Thyroid gland (tissue), 4 donors: ENCODE measurements at regions of chr3 and their contacts with region 1.

Region 1: GRCh38 chr3:194573691-194574437 is 59.4 kb downstream of the TMEM44 start:
- DNase-seq: peak; percentile 50 to 54
- H3K4me3 ChIP-seq: no peak overlapping the region
- H3K27ac ChIP-seq: peak overlapping the region in 1 of 3 donors; percentile 48
- H3K4me1 ChIP-seq: peaks cover 8 to 25% of the 10 kb centered on the region in 2 donors
- H3K27me3 ChIP-seq: no peaks in the 10 kb centered on the region
- CTCF ChIP-seq: peak in 5 of 6 experiments; percentile 17 to 70 (median 63)
- POLR2A ChIP-seq: no peak

Region 2: DNA sequence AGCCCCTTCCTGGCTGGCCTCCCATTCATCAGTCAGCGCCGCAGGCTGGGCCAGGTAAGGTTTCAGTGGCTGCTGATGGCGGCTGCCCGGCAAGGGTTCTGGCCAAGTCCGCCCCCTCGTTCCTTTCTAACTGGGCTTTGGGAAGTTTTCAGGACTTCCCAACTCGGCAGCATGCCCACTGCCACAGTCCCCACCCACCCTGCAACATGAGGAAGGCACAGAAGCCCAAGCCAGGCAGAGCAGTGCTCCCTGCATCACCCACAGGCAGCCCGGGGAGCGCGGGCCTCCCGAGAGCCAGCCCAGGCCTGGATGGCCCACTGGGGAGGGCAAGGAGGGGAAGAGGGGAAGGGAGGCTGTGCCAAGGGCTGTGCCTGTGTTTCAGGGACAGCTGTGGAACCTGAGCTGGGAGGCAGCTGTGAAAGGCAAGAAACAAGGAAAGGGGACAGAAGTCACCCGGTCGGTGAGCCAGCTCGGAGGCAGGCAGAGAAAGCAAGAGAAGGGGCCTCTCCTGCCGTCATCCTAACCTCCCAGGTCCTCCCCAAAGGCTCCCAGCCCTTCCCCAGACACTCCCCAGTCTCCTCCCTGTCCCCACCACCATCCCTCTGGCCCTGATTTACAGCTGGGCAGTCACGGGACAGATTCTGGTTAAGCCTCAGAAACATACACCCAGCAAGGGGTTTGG is 296.6 kb before region 1 on chr3:
- intact Hi-C with region 1: no loop called
- DNase-seq: peak; percentile 74 to 78
- H3K4me3 ChIP-seq: no peak overlapping the region
- H3K27ac ChIP-seq: peak overlapping the region; percentile 81 to 93 (median 85)
- H3K4me1 ChIP-seq: peaks cover 28 to 34% of the 10 kb centered on the region in 2 donors
- H3K27me3 ChIP-seq: no peaks in the 10 kb centered on the region
- CTCF ChIP-seq: no peak
- POLR2A ChIP-seq: peak in 1 of 2 donors; percentile 47

Region 3: GRCh38 chr3:194472290-194472920 is 101.5 kb before region 1 on chr3:
- intact Hi-C with region 1: loop called (anchors 5 kb)
- DNase-seq: no peak
- H3K4me3 ChIP-seq: no peak overlapping the region
- H3K27ac ChIP-seq: no peak overlapping the region
- H3K4me1 ChIP-seq: peaks cover 5 to 20% of the 10 kb centered on the region in 2 donors
- H3K27me3 ChIP-seq: no peaks in the 10 kb centered on the region
- CTCF ChIP-seq: peak; percentile 84 to 98 (median 94)
- POLR2A ChIP-seq: no peak

Region 4: DNA sequence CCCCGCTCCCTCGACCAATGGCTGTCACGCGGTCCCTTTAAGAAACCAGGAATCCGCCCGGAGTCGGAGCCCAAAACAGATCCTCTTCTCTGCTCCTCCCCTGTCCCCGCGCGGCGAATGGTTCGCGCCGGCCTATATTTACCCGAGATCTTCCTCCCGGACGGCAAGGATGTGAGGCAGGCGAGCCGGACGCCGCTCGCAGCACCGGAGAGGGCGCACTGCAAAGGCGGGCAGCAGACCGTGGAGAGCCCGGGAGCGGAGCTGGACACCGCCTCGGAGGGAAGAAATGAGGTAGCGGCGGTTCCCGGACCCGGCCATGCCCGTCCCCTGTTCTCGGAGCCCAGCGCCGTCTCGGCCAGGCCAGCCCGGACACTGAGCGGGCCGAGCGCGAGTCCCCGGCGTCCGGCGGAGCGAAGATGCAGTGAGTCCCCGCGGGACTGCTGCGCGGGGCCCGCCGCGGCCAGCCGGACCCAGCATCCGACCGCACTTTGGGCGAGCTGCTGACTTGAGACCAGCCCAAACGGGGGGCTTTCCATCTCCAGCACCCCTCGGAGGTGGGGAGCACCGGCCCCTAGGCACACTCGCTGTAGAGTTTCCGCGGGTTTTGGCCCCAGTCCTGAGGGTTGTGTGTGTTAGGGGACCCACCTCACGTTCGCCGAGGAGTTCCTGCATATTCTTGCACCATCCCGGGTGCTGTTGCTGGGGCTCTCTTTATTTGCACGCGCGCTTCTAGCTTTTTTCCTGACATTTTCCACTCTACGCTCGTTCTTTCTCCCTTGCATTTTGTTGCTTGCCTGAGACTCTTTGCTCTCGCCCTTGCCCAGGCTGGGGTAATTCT is 112.1 kb after region 1 on chr3 and contains the start of gene FAM43A:
- intact Hi-C with region 1: no loop called
- DNase-seq: peak; percentile 89 to 94
- H3K4me3 ChIP-seq: peak within 1 kb of the TSS in 2 of 3 donors; percentile 44 to 51
- H3K27ac ChIP-seq: peak within 1 kb of the TSS; percentile 51 to 76 (median 60)
- H3K4me1 ChIP-seq: peaks cover 25 to 32% of the 10 kb centered on the region in 2 donors
- H3K27me3 ChIP-seq: no peaks in the 10 kb centered on the region
- CTCF ChIP-seq: peak in 3 of 6 experiments; percentile 7 to 20 (median 18)
- POLR2A ChIP-seq: peak; percentile 83 to 92
- total RNA-seq, gene FAM43A: 16.8 to 33.9 (median 22.4) TPM

Region 5: GRCh38 chr3:194787072-194787471 is 213.2 kb after region 1 on chr3:
- intact Hi-C with region 1: no loop called
- DNase-seq: no peak
- H3K4me3 ChIP-seq: no peak overlapping the region
- H3K27ac ChIP-seq: no peak overlapping the region
- H3K4me1 ChIP-seq: peaks cover 5 to 20% of the 10 kb centered on the region in 2 donors
- H3K27me3 ChIP-seq: no peaks in the 10 kb centered on the region
- CTCF ChIP-seq: no peak
- POLR2A ChIP-seq: no peak